ENCODE measurements at regions of chr17 and their contacts with region 1.

Region 1: DNA sequence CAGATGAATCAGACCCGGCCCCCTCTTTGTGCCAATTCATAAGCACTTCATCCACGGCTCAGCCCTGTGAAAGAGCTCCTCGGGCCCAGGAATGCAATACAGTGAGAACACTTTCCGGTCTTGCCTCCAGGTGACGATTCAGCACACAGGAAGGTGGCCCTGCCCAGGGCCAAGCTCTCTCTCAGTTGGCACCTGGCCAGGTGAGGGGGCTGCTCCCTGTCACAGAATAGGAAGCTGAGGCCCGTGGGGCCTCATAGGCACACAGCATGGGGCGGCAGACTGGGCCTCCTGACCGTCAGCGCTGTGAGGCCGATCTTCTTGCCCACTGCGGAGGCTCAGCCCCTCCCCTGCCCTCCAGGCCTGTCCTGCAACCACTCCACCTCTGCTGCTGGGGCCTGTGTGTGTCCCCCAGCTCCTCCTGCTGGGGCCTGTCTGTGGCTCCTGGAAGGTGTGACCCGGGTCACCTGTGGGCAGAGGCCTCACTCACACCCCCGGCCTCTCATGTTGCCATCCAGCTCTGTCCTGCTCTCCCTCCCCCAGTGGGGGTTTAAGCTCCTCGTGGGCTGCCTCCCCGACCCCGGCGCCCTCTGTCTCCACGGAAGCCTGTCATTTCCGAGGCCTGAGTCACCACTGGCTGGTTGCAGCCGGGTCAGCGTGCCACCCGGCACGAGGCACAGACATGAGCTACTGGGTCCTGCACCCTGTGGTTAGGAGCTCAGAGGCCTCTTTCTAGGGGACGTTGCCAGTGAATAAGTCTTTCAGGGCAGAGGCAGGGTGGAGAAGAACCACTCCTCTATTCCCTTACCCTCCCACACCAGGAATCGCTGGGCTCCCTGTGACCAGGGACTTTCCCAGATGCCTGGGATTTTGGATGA is 114.4 kb downstream of the SEC14L1 start:
- DNase-seq: peak; percentile 89
- ATAC-seq: peak; percentile 83
- H3K4me3 ChIP-seq: peak overlapping the region; percentile 18 to 47
- H3K27ac ChIP-seq: peak overlapping the region; percentile 96
- H3K4me1 ChIP-seq: peaks cover 33 to 48% of the 10 kb centered on the region in 2 experiments
- H3K27me3 ChIP-seq: no peaks in the 10 kb centered on the region
- CTCF ChIP-seq: peak in 1 of 3 experiments; percentile 19; a peak in 2 of 6 replicates
- POLR2A ChIP-seq: no peak
- RAD21 ChIP-seq: no peak; the same call in 1 of the 2 replicates

Region 2: DNA sequence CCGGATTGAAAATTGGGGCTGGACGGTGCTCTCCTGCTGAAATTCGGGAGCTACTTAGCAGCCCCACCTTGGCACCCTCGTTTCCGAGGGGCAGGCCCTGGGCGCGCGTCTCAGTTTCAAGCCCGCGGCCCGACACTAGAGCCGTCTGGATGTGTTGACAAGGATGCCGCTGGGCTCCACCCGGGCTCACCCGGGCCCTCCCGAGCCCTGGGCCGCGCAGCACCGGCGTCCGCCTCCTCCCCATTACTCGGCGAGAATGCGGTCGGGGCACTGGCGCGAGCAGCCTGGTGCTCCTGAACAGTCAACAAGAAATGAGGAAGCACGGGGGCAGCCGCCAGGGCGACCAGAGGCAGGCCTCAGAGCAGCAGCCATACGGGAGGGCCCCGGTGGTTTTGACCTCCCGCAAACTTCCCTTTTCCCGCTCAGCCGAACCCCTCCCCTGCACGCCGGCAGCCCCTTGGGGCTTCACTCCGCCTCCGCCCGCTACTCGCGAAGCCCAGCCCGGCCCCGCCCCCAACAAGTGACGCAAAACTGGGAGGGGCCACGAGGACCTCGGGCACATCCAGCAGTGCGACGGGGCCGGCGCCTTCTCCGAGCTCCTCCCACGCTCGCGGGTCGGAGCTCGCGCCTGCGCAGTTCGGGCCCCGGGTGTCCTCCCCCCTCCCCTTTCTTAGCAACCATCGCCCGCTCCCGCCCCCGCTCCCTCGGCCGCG is 114.9 kb before region 1 on chr17:
- CTCF ChIA-PET with region 1: no interaction called
- POLR2A ChIA-PET with region 1: interaction called, 13 read pairs
- RAD21 ChIA-PET with region 1: no interaction called
- intact Hi-C with region 1: no loop called
- DNase-seq: peak; percentile 96
- ATAC-seq: peak; percentile 94
- H3K4me3 ChIP-seq: peak overlapping the region; percentile 53 to 82
- H3K27ac ChIP-seq: peak overlapping the region; percentile 91
- H3K4me1 ChIP-seq: peaks cover 13 to 31% of the 10 kb centered on the region in 2 experiments
- H3K27me3 ChIP-seq: no peaks in the 10 kb centered on the region
- CTCF ChIP-seq: no peak
- POLR2A ChIP-seq: peak; percentile 96
- RAD21 ChIP-seq: no peak

Region 3: GRCh38 chr17:77266891-77267341 is 11.7 kb after region 1 on chr17:
- CTCF ChIA-PET with region 1: interaction called, 12 read pairs
- POLR2A ChIA-PET with region 1: interaction called, 4 read pairs
- RAD21 ChIA-PET with region 1: no interaction called
- intact Hi-C with region 1: no loop called
- DNase-seq: no peak
- ATAC-seq: peak; percentile 92
- H3K4me3 ChIP-seq: no peak overlapping the region
- H3K27ac ChIP-seq: no peak overlapping the region
- H3K4me1 ChIP-seq: peaks cover 6 to 17% of the 10 kb centered on the region in 2 experiments; a peak in 3 of 4 replicates
- H3K27me3 ChIP-seq: no peaks in the 10 kb centered on the region
- CTCF ChIP-seq: peak; percentile 35 to 91 (median 84); a peak in 5 of 6 replicates
- POLR2A ChIP-seq: no peak
- RAD21 ChIP-seq: peak; percentile 44

Region 4: GRCh38 chr17:77280980-77281903 is 26.1 kb after region 1 on chr17:
- CTCF ChIA-PET with region 1: interaction called, 16 read pairs
- POLR2A ChIA-PET with region 1: interaction called, 16 read pairs
- RAD21 ChIA-PET with region 1: interaction called, 5 to 8 read pairs
- intact Hi-C with region 1: no loop called
- DNase-seq: no peak
- ATAC-seq: peak; percentile 75
- H3K4me3 ChIP-seq: peak overlapping the region; percentile 88 to 96
- H3K27ac ChIP-seq: peak overlapping the region; percentile 98
- H3K4me1 ChIP-seq: peaks cover 55 to 60% of the 10 kb centered on the region in 2 experiments
- H3K27me3 ChIP-seq: no peaks in the 10 kb centered on the region
- CTCF ChIP-seq: peak in 2 of 3 experiments; percentile 6 to 30; a peak in 2 of 6 replicates
- POLR2A ChIP-seq: peak; percentile 46
- RAD21 ChIP-seq: no peak

Region 5: DNA sequence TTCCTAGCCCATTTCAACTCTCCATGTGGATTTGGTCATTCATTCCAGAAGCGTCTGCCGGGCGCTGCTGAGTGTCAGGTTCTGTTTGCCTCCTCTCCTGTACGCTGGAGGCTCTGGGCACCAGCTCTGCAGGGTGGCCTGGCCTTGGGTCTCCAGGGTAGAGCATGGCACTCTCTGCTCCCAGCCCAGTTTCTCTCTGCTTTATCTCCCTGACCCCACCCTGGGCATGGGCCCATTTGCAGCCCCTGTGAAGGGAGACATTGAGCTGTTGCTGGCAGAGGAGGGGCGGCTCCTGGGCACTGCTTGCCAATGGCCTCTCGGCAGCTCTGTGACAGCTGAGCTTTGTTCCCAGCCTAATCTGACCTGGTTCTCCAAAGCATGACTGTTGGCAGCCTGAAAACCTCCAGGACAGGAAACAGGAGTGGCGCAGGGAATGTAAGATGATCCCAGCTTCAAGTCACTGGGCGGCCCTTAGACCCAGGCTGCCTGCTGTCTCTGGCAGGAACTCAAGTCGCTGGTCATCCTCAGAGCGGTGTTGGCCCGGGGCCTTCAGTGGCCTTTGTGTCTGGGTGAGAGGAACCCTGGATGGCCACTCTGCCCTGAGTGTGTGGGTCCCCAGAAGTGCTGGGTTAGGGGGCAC is 32.4 kb after region 1 on chr17:
- CTCF ChIA-PET with region 1: interaction called, 3 read pairs
- POLR2A ChIA-PET with region 1: interaction called, 12 read pairs
- RAD21 ChIA-PET with region 1: interaction called, 3 to 5 read pairs
- intact Hi-C with region 1: loop called (anchors 1 kb)
- DNase-seq: peak; percentile 92
- ATAC-seq: peak; percentile 60
- H3K4me3 ChIP-seq: peak overlapping the region; percentile 39 to 52
- H3K27ac ChIP-seq: peak overlapping the region; percentile 98
- H3K4me1 ChIP-seq: peaks cover 79 to 95% of the 10 kb centered on the region in 2 experiments
- H3K27me3 ChIP-seq: no peaks in the 10 kb centered on the region
- CTCF ChIP-seq: no peak
- POLR2A ChIP-seq: no peak
- RAD21 ChIP-seq: no peak

Region 6: DNA sequence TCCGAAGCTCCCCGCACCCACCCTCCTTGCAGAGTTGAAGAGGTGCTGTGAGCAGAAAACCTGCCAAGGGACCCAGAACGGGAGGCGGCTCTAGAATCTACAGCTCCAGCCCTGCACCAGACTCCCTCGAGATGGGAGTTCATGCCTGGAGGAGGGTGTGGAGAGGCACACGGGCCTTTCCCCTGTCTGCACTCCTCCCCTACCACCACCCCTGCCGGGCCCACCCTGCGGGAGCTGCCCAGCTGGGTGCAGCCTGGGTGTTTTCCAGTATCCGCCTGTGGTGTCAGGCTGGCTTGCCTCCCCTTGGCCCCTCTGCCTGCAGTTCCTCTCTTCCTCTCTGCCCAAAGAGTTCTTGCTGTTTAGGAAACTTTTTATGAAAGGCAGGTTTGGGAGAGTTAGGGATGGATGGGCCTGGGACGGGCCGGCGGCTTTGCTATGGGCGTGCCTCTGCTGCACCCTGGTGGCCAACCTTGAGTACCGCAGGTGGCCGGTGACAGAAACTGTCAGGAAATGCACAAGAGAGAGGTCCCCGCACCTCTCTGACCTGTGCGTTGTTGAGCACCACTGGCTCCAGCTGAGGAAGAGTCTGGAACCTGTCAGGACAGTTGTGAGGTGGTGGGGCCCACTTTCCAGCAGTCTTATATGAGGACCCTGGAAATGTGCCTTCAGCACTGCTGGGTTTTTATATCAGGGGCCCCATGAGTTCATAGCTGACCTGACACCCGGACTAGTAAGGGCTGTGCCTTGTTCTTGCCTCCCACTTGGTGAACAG is 239.7 kb after region 1 on chr17:
- CTCF ChIA-PET with region 1: no interaction called
- POLR2A ChIA-PET with region 1: no interaction called
- RAD21 ChIA-PET with region 1: interaction called in 1 of 2 experiments, 4 read pairs
- intact Hi-C with region 1: loop called (anchors 10 kb)
- DNase-seq: peak; percentile 45
- ATAC-seq: peak; percentile 87
- H3K4me3 ChIP-seq: no peak overlapping the region
- H3K27ac ChIP-seq: no peak overlapping the region; the same call in 1 of the 2 replicates
- H3K4me1 ChIP-seq: no peaks in the 10 kb centered on the region
- H3K27me3 ChIP-seq: no peaks in the 10 kb centered on the region
- CTCF ChIP-seq: peak; percentile 91 to 100 (median 99)
- POLR2A ChIP-seq: no peak
- RAD21 ChIP-seq: peak; percentile 99

Measured in HCT116 (cell line).